Ovary (tissue), 10 donors: ENCODE measurements at regions of chr15 and their contacts with region 1.

Region 1: GRCh38 chr15:38335116-38335515 is 82.5 kb downstream of the SPRED1 start:
- DNase-seq: no peak
- H3K4me3 ChIP-seq: no peak overlapping the region
- H3K27ac ChIP-seq: no peak overlapping the region
- H3K4me1 ChIP-seq: no peaks in the 10 kb centered on the region
- H3K27me3 ChIP-seq: no peaks in the 10 kb centered on the region
- CTCF ChIP-seq: no peak
- EP300 ChIP-seq: no peak
- POLR2A ChIP-seq: no peak

Region 2: GRCh38 chr15:38275959-38276358 is 59.2 kb before region 1 on chr15:
- intact Hi-C with region 1: loop called in 1 of 4 experiments (anchors 10 kb)
- DNase-seq: no peak
- H3K4me3 ChIP-seq: no peak overlapping the region
- H3K27ac ChIP-seq: no peak overlapping the region
- H3K4me1 ChIP-seq: peaks cover 1% of the 10 kb centered on the region
- H3K27me3 ChIP-seq: no peaks in the 10 kb centered on the region
- CTCF ChIP-seq: no peak
- EP300 ChIP-seq: no peak
- POLR2A ChIP-seq: no peak